ENCODE measurements at regions of chr3 and their contacts with region 1.

Region 1: GRCh38 chr3:184811999-184812661 is at the start of gene VPS8:
- DNase-seq: peak; percentile 96 to 98 (median 97)
- H3K4me3 ChIP-seq: peak within 1 kb of the TSS; percentile 69 to 97 (median 91)
- H3K27ac ChIP-seq: peak within 1 kb of the TSS; percentile 82 to 83
- H3K4me1 ChIP-seq: peaks cover 24 to 55% (median 40%) of the 10 kb centered on the region in 4 experiments
- H3K27me3 ChIP-seq: no peaks in the 10 kb centered on the region

Region 2: DNA sequence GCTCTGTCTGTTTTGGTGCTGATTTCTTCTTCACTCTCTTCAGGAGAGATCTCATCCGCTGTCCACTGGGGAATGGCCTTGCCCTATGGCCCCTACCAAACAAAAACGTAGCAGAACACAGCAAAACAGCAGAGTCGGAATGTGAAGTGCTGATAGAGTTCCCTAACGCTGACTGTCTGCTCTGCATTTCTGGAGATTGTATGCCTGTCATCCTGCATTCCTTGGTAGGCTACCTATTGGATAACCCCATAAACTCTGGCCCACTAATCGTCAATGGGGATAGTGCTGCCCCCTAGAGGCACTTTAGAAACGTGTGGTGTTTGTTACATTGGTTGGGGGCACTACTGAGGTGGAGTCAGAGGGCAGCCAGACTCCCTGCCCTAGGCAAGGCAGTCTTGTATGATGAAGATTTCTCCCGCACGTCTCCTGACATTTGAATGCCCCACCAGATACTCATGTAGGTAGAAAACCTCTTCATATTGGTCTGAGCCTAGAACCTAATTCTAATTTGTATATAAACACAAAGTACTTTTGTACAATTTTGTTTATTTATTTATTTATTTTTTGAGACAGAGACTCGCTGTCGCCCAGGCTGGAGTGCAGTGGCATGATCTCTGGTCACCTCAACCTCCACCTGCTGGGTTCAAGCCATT is 84.6 kb before region 1 on chr3:
- CTCF ChIA-PET with region 1: no interaction called
- POLR2A ChIA-PET with region 1: no interaction called
- DNase-seq: peak; percentile 81 to 87 (median 82)
- H3K4me3 ChIP-seq: no peak overlapping the region
- H3K27ac ChIP-seq: no peak overlapping the region
- H3K4me1 ChIP-seq: no peaks in the 10 kb centered on the region
- H3K27me3 ChIP-seq: no peaks in the 10 kb centered on the region

Region 3: DNA sequence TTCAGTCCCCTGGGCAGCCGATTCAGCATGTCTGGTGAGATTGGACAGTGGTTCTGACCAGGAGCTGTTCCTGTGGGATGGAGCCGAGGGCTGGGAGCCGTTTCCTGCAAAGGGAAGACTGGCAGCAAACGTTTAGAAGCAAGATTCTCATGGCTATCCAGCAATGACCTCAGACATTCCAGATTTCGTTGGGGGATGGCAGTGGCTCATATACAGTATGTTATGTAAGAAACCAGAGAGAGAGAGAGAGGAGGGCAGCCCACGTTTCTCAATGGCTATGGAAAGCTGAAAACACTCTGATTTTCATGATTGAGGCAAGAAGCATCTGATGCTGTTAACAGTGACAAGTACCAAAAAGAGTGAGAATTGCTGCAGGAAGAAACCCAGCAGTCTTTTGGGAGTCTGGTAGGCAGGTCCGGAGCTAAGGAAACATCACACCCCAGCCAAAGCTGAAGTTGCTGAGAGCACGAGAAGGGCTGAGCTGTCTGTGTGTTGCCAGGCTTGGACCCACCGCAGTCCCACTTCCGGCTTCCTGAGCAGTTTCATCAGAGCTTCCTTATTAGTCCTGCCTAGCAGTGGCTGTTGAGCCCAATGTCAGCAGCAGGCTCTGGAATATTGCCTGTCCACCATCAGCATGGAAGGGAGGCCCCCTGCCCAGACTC is 25.7 kb before region 1 on chr3:
- CTCF ChIA-PET with region 1: interaction called, 47 read pairs
- POLR2A ChIA-PET with region 1: no interaction called
- DNase-seq: peak; percentile 70 to 87 (median 85)
- H3K4me3 ChIP-seq: peak overlapping the region in 4 of 7 experiments; percentile 28 to 42 (median 33)
- H3K27ac ChIP-seq: no peak overlapping the region
- H3K4me1 ChIP-seq: peaks cover 17 to 39% (median 29%) of the 10 kb centered on the region in 4 experiments
- H3K27me3 ChIP-seq: no peaks in the 10 kb centered on the region

Region 4: DNA sequence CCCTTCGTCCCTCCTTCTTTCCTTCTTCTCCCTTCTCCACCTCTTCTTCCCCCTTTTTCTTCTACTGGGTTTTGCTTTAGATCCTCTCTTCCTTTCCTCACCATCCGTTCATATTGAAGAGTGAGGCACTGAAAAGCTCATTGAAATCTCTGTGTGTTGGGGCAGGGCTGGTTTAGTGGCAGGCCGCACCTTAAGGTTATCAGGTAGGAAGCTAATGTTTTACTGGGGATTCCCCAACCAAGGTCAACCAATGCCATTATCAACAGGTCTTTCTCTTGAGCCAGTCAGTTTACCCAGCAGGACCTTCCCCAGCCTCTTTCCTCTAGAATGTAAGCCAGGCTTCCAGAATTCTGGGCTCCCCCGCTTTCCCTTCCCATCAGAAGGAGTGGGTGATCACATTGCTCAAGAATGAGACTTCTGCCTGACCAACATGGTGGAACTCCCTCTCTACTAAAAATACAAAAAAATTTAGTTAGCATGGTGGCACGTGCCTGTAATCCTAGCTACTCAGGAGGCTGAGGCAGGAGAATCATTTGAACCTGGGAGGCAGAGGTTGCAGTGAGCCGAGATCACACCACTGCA is 11.7 kb before region 1 on chr3:
- CTCF ChIA-PET with region 1: interaction called, 36 read pairs
- POLR2A ChIA-PET with region 1: no interaction called
- DNase-seq: no peak
- H3K4me3 ChIP-seq: no peak overlapping the region
- H3K27ac ChIP-seq: no peak overlapping the region
- H3K4me1 ChIP-seq: peaks cover 2 to 16% (median 6%) of the 10 kb centered on the region in 4 experiments
- H3K27me3 ChIP-seq: no peaks in the 10 kb centered on the region

Measured in common myeloid progenitor, CD34-positive (primary cell).